ENCODE measurements at regions of chr16 and their contacts with region 1.

Region 1: DNA sequence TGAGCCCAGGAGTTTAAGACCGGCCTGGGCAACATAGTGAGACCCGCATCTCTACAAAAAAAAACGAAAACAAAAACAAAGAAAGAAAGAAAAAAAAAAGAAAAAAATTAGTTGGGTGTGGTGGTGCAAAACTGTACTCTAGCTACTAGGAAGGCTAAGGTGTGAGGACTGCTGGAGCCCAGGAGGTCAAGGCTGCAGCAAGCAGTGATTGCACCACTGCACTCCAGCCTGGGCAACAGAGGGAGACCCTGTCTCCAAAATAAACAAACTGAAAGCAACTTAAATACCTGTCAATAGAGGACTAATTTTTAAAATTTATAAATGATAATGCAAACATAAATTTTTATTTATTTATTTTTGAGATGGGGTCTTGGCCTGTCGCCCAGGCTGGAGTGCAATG is 17.3 kb downstream of the ATP2A1 start:
- DNase-seq: no peak
- ATAC-seq: no peak
- H3K4me3 ChIP-seq: no peak overlapping the region
- H3K27ac ChIP-seq: no peak overlapping the region
- H3K4me1 ChIP-seq: peaks cover 19% of the 10 kb centered on the region
- H3K27me3 ChIP-seq: no peaks in the 10 kb centered on the region
- CTCF ChIP-seq: no peak

Region 2: GRCh38 chr16:28859326-28859725 is 36.3 kb before region 1 on chr16:
- intact Hi-C with region 1: no loop called
- DNase-seq: no peak
- ATAC-seq: no peak
- H3K4me3 ChIP-seq: no peak overlapping the region
- H3K27ac ChIP-seq: no peak overlapping the region
- H3K4me1 ChIP-seq: no peaks in the 10 kb centered on the region
- H3K27me3 ChIP-seq: no peaks in the 10 kb centered on the region
- CTCF ChIP-seq: no peak

Region 3: DNA sequence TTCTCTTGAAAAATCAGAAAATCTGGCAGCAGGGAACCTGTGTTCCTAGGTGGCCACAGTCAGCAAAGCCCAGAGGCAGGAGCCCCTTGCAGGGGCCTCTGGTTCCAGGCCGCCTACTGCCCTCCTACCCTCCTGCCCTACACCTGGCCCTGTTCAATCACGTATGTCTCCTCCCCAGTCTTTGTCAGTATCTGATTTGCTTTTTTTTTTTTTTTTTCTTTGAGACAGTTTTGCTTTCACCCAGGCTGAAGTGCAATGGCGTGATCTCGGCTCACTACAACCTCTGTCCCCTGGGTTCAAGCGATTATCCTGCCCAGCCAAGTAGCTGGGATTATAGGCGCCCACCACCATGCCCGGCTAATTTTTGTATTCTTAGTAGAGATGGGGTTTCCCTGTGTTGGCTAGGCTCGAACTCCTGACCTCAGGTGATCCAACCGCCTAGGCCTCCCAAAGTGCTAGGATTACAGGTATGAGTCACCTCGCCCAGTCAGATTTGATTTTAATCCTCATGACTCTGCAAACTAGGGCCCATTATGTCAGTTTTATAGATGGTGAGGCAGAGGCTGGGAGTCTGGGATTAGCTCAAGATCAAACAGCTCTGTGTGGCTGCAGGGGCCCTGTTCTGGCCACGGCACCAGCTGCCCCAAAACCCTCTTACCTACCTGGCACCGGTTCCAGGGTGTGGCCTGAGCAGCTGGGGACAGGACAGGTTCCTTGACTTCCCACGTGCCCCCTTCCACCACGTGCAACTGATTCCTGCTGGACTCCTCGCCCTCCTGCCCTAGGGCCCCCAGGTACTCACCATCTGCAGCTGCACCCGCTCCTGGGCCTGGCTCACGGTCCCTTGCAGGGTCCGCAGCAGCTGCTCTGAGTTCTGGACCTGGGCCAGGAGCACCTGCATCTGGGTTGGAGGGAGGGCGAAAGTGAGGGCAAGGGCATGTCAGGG is 14.8 kb after region 1 on chr16:
- intact Hi-C with region 1: loop called in 1 of 2 experiments (anchors 2 kb)
- DNase-seq: peak in 1 of 2 donors; percentile 34
- ATAC-seq: peak; percentile 39 to 59 (median 46)
- H3K4me3 ChIP-seq: no peak overlapping the region
- H3K27ac ChIP-seq: peak overlapping the region; percentile 52
- H3K4me1 ChIP-seq: no peaks in the 10 kb centered on the region
- H3K27me3 ChIP-seq: no peaks in the 10 kb centered on the region
- CTCF ChIP-seq: no peak

Region 4: GRCh38 chr16:29139261-29139811 is 243.7 kb after region 1 on chr16:
- intact Hi-C with region 1: no loop called
- DNase-seq: no peak
- ATAC-seq: no peak
- H3K4me3 ChIP-seq: no peak overlapping the region
- H3K27ac ChIP-seq: no peak overlapping the region
- H3K4me1 ChIP-seq: no peaks in the 10 kb centered on the region
- H3K27me3 ChIP-seq: peaks cover 0 to 5% (median 2%) of the 10 kb centered on the region in 3 donors
- CTCF ChIP-seq: no peak

Measured in psoas muscle (tissue), 8 donors.